ENCODE measurements at regions of chr10 and their contacts with region 1.

Region 1: DNA sequence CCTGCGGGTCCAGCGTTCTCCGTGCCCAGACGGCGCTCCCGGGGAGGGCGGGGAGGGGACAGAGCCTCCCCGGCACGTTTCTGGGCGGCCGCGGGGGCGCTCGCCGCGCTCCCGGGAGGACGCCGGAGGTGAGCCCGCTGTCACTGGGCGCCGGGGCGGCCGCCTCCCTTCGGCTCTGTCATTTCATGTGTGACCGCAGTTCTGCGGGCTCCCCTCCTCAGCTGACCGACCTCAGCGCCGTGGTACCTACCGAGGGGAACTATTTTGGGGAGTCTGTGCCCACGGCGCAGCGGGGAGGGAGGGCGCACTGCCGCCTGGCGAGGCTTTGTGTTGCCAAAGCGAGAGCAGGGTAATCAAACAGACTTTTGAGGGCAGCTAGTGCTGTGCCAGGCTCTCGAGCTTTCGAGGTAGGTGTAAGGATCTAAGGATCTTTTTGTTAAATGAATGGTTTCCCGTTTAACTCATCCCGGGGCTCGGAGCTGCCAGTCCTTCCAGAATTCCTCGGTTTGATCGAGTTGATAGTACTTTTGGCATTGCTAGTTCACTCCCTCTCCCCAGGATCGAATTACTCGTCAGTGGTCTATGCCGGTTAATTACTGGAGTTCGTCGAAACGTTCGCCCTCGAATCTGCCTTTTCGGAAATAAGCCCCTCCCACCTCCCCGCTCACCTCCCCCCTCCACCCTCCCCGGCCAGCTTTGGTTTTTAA is 1.9 kb downstream of the ARID5B start:
- DNase-seq: peak; percentile 67 to 78 (median 70)
- H3K4me3 ChIP-seq: peak overlapping the region; percentile 63 to 88
- H3K4me3 Mint-ChIP-seq: peak overlapping the region; percentile 86 to 96 (median 94)
- H3K27ac ChIP-seq: peak overlapping the region; percentile 80
- H3K27ac Mint-ChIP-seq: peak overlapping the region; percentile 84 to 98 (median 97)
- H3K4me1 ChIP-seq: peaks cover 51% of the 10 kb centered on the region
- H3K4me1 Mint-ChIP-seq: peaks cover 28 to 63% (median 40%) of the 10 kb centered on the region in 4 donors
- H3K27me3 ChIP-seq: no peaks in the 10 kb centered on the region
- H3K27me3 Mint-ChIP-seq: no peaks in the 10 kb centered on the region

Region 2: DNA sequence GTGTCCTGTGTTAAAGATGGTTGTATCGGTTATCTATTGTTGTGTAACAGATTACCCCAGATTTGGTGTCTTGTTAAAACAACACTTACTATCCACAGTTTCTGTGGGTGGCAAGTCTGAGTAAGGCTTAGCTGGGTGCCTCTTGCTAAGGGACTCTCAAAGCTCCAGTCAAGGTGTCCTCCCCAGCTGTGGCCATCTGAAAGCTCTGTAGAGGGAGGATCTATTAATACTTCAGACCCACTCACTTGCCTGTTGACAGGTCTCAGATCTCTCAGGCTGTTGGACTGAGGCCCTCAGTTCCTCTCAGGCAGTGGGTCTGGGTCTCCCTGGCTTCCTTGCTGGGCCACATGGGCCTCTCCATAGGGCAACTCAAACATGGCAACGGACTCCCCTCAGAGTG is 17.8 kb after region 1 on chr10:
- CTCF ChIA-PET with region 1: interaction called, 10 read pairs
- POLR2A ChIA-PET with region 1: interaction called, 7 read pairs
- intact Hi-C with region 1: no loop called
- DNase-seq: no peak
- H3K4me3 ChIP-seq: no peak overlapping the region
- H3K4me3 Mint-ChIP-seq: no peak overlapping the region
- H3K27ac ChIP-seq: no peak overlapping the region
- H3K27ac Mint-ChIP-seq: peak overlapping the region in 4 of 7 donors; percentile 8 to 52 (median 48)
- H3K4me1 ChIP-seq: peaks cover 47% of the 10 kb centered on the region
- H3K4me1 Mint-ChIP-seq: peaks cover 38 to 74% (median 50%) of the 10 kb centered on the region in 4 donors
- H3K27me3 ChIP-seq: no peaks in the 10 kb centered on the region
- H3K27me3 Mint-ChIP-seq: no peaks in the 10 kb centered on the region

Region 3: DNA sequence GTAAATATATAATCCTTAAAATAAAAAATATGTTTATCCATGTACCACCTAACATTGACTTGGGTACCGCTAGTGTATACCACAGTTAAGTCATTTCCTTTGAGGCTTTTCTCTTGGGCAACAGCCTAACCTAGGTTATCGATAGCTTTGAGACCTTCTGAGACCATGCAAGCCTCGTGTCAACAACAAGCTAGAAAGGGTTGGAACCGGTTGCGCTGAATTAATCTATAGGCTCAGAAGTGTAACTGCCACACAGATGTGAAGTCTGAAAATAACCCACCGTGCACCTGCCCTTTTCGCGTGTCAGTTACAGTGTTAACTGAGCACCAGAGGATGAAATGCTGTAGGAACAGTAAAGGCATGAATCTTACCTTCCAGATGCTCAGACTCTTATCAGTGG is 57.9 kb after region 1 on chr10:
- CTCF ChIA-PET with region 1: interaction called, 7 read pairs
- POLR2A ChIA-PET with region 1: interaction called, 61 read pairs
- intact Hi-C with region 1: no loop called
- DNase-seq: peak; percentile 46 to 54 (median 51)
- H3K4me3 ChIP-seq: no peak overlapping the region
- H3K4me3 Mint-ChIP-seq: peak overlapping the region in 7 of 8 donors; percentile 42 to 73 (median 53)
- H3K27ac ChIP-seq: no peak overlapping the region
- H3K27ac Mint-ChIP-seq: peak overlapping the region; percentile 78 to 95 (median 85)
- H3K4me1 ChIP-seq: peaks cover 68% of the 10 kb centered on the region
- H3K4me1 Mint-ChIP-seq: peaks cover 54 to 67% (median 61%) of the 10 kb centered on the region in 4 donors
- H3K27me3 ChIP-seq: no peaks in the 10 kb centered on the region
- H3K27me3 Mint-ChIP-seq: no peaks in the 10 kb centered on the region

Region 4: DNA sequence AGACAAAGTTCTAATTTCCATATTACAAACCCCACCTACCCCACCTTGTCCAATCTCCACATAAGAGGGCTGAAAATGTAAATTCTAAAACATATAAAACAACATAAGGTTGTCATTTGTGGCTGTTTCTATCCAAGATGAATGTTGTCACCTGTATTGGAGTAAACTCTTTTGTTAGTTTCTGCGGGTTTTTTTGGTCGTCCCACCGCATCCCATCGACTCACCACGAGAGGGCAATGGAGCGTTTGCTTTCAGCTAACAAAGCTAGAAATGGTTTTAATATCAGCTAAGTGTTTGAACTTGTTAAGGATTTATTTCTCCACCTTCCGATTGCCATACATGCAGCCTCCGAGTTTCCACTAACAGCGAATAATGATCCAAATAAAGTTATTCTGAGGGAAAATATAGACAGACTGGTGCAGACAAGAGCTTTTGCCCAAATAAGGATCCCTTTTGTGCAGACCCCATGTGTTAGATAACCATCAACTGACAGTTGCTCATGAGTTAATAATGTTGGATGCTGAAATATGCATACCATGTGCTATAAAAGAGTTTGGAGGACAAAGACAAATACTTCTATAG is 135.3 kb after region 1 on chr10:
- CTCF ChIA-PET with region 1: interaction called, 228 read pairs
- POLR2A ChIA-PET with region 1: interaction called, 251 read pairs
- intact Hi-C with region 1: loop called (anchors 1 kb)
- DNase-seq: peak; percentile 74 to 81 (median 76)
- H3K4me3 ChIP-seq: peak overlapping the region in 1 of 2 donors; percentile 34
- H3K4me3 Mint-ChIP-seq: peak overlapping the region; percentile 48 to 89 (median 82)
- H3K27ac ChIP-seq: no peak overlapping the region
- H3K27ac Mint-ChIP-seq: peak overlapping the region; percentile 53 to 93 (median 78)
- H3K4me1 ChIP-seq: peaks cover 74% of the 10 kb centered on the region
- H3K4me1 Mint-ChIP-seq: peaks cover 60 to 78% (median 68%) of the 10 kb centered on the region in 4 donors
- H3K27me3 ChIP-seq: no peaks in the 10 kb centered on the region
- H3K27me3 Mint-ChIP-seq: no peaks in the 10 kb centered on the region

Region 5: DNA sequence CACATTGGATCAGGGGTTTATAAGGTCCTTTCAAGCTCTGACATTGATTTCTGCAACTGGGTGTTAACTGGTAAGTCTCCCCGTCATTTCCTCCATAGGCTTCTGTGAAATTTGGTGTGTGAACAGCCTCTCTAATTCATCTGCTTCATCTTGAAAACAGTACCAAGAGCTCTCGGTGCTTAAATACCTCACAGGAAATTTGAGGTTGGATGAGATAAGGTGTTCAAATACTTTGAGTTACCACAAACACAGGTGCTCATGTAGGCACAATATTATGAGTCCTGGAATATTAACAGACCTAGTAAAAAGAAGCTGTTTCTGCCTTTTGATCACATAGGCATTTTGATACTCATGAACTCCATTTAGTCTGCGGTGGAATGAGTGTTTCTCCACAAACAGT is 280.1 kb after region 1 on chr10:
- CTCF ChIA-PET with region 1: interaction called, 3 read pairs
- POLR2A ChIA-PET with region 1: interaction called, 58 read pairs
- intact Hi-C with region 1: loop called (anchors 1 kb)
- DNase-seq: peak; percentile 81 to 92 (median 88)
- H3K4me3 ChIP-seq: no peak overlapping the region
- H3K4me3 Mint-ChIP-seq: peak overlapping the region in 7 of 8 donors; percentile 24 to 65 (median 51)
- H3K27ac ChIP-seq: peak overlapping the region; percentile 42
- H3K27ac Mint-ChIP-seq: peak overlapping the region; percentile 83 to 95 (median 92)
- H3K4me1 ChIP-seq: peaks cover 71% of the 10 kb centered on the region
- H3K4me1 Mint-ChIP-seq: peaks cover 57 to 84% (median 77%) of the 10 kb centered on the region in 4 donors
- H3K27me3 ChIP-seq: no peaks in the 10 kb centered on the region
- H3K27me3 Mint-ChIP-seq: no peaks in the 10 kb centered on the region

Region 6: DNA sequence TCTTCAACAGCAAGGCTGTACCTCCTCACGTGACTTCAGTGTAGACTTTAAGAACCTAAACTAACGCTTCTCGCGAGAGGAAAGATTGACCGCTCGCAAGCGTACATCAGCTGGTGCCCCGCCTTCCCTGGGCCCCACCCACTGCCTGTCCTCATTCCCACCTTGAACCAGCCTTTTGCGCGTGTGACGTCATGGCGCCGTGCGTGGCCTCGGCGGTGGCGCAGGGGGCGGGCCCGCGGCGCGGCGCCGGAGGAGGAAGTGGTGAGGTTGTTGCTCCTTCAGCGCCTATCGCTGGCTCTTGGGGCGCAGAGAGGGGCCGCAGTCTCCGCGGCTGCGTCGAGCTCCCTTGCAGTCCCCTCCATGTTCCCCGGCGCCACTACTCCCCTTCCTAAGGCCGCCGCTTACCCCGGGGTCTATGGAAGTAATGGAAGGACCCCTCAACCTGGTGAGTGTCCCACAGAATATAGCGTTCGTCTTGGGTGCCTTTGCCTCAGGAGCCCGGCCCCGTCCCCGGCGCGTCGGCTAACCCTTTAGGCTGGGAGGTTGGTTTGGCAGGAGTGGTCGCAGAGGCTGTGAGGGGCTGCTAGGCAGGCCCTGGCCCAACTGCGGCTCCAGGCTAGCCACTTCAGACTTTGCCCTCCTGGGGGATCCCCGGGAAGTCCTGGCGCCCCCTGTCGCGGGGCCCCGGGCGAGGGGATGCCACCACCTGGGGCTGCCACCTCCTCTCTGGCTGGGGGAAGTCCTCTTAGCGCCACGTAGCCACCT is 1229.9 kb after region 1 on chr10 and contains the start of gene NRBF2:
- CTCF ChIA-PET with region 1: no interaction called
- POLR2A ChIA-PET with region 1: interaction called, 4 read pairs
- intact Hi-C with region 1: loop called (anchors 5 kb)
- DNase-seq: peak; percentile 97 to 98 (median 98)
- H3K4me3 ChIP-seq: peak within 1 kb of the TSS; percentile 81 to 88
- H3K4me3 Mint-ChIP-seq: peak within 1 kb of the TSS; percentile 92 to 95 (median 92)
- H3K27ac ChIP-seq: peak within 1 kb of the TSS; percentile 96
- H3K27ac Mint-ChIP-seq: peak within 1 kb of the TSS; percentile 92 to 98 (median 97)
- H3K4me1 ChIP-seq: peaks cover 46% of the 10 kb centered on the region
- H3K4me1 Mint-ChIP-seq: peaks cover 24 to 45% (median 35%) of the 10 kb centered on the region in 4 donors
- H3K27me3 ChIP-seq: no peaks in the 10 kb centered on the region
- H3K27me3 Mint-ChIP-seq: peaks cover 0 to 7% of the 10 kb centered on the region in 2 donors
- total RNA-seq, gene NRBF2: 17.8 to 18.2 TPM